CD4-positive, alpha-beta memory T cell (primary cell): ENCODE measurements at regions of chr6 and their contacts with region 1.

Region 1: GRCh38 chr6:139364302-139364981 is 10.0 kb downstream of the CITED2 start:
- DNase-seq: peak in 4 of 5 donors; percentile 66 to 74 (median 68)
- H3K4me3 ChIP-seq: no peak overlapping the region
- H3K4me3 Mint-ChIP-seq: peak overlapping the region in 7 of 8 donors; percentile 27 to 64 (median 36)
- H3K27ac ChIP-seq: no peak overlapping the region
- H3K27ac Mint-ChIP-seq: peak overlapping the region in 6 of 7 donors; percentile 2 to 82 (median 62)
- H3K4me1 ChIP-seq: peaks cover 20% of the 10 kb centered on the region
- H3K4me1 Mint-ChIP-seq: peaks cover 28 to 45% (median 33%) of the 10 kb centered on the region in 4 donors
- H3K27me3 ChIP-seq: no peaks in the 10 kb centered on the region
- H3K27me3 Mint-ChIP-seq: no peaks in the 10 kb centered on the region

Region 2: GRCh38 chr6:139081471-139081870 is 283.0 kb before region 1 on chr6:
- CTCF ChIA-PET with region 1: no interaction called
- POLR2A ChIA-PET with region 1: no interaction called
- intact Hi-C with region 1: no loop called
- DNase-seq: no peak
- H3K4me3 ChIP-seq: no peak overlapping the region
- H3K4me3 Mint-ChIP-seq: no peak overlapping the region
- H3K27ac ChIP-seq: no peak overlapping the region
- H3K27ac Mint-ChIP-seq: no peak overlapping the region
- H3K4me1 ChIP-seq: no peaks in the 10 kb centered on the region
- H3K4me1 Mint-ChIP-seq: peaks cover 0 to 10% (median 6%) of the 10 kb centered on the region in 4 donors
- H3K27me3 ChIP-seq: no peaks in the 10 kb centered on the region
- H3K27me3 Mint-ChIP-seq: peaks cover 0 to 1% of the 10 kb centered on the region in 2 donors

Region 3: DNA sequence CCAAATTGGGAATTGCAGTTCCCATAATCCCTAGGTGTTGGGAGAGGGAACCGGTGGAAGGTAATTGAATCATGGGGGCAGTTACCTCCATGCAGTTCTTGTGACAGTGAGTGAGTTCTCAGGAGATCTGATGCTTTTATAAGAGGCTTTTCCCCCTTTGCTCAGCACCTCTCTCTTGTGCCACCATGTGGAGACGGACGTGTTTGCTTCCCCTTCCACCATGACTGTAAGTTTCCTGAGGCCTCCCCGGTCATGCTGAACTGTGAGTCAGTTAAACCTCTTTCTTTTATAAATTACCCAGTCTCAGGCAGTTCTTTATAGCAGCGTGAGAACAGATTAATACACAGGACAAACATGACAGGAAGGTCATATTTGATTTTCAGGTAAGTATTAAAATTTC is 254.9 kb before region 1 on chr6:
- CTCF ChIA-PET with region 1: interaction called, 19 read pairs
- POLR2A ChIA-PET with region 1: interaction called, 6 read pairs
- intact Hi-C with region 1: no loop called
- DNase-seq: peak in 4 of 5 donors; percentile 11 to 30 (median 21)
- H3K4me3 ChIP-seq: no peak overlapping the region
- H3K4me3 Mint-ChIP-seq: peak overlapping the region in 2 of 8 donors; percentile 13 to 39
- H3K27ac ChIP-seq: no peak overlapping the region
- H3K27ac Mint-ChIP-seq: peak overlapping the region; percentile 3 to 87 (median 44)
- H3K4me1 ChIP-seq: peaks cover 50% of the 10 kb centered on the region
- H3K4me1 Mint-ChIP-seq: peaks cover 38 to 59% (median 51%) of the 10 kb centered on the region in 4 donors
- H3K27me3 ChIP-seq: no peaks in the 10 kb centered on the region
- H3K27me3 Mint-ChIP-seq: no peaks in the 10 kb centered on the region

Region 4: DNA sequence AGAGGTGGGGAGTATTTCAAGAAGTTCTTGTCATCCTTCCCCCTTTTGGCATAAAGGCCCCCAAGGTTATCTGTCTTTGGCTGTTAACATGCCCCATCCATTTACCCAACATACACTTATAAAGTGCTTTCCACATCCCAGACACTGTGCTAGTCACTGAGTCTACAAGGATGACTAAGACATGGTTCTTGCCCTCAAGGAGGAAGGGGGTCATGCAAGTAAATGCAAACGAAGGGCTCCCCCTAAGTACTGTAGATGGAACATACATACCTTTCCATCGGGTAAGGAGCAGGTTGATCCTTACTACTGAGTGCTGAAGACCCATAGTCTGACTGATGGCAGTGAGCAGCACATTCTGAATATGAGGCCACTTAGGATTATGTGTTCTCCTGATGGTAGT is 191.3 kb before region 1 on chr6:
- CTCF ChIA-PET with region 1: interaction called, 10 read pairs
- POLR2A ChIA-PET with region 1: no interaction called
- intact Hi-C with region 1: no loop called
- DNase-seq: peak in 3 of 5 donors; percentile 24 to 61 (median 25)
- H3K4me3 ChIP-seq: no peak overlapping the region
- H3K4me3 Mint-ChIP-seq: peak overlapping the region in 7 of 8 donors; percentile 20 to 69 (median 53)
- H3K27ac ChIP-seq: no peak overlapping the region
- H3K27ac Mint-ChIP-seq: peak overlapping the region; percentile 29 to 88 (median 77)
- H3K4me1 ChIP-seq: peaks cover 97% of the 10 kb centered on the region
- H3K4me1 Mint-ChIP-seq: peaks cover 81 to 93% (median 89%) of the 10 kb centered on the region in 4 donors
- H3K27me3 ChIP-seq: no peaks in the 10 kb centered on the region
- H3K27me3 Mint-ChIP-seq: no peaks in the 10 kb centered on the region

Region 5: DNA sequence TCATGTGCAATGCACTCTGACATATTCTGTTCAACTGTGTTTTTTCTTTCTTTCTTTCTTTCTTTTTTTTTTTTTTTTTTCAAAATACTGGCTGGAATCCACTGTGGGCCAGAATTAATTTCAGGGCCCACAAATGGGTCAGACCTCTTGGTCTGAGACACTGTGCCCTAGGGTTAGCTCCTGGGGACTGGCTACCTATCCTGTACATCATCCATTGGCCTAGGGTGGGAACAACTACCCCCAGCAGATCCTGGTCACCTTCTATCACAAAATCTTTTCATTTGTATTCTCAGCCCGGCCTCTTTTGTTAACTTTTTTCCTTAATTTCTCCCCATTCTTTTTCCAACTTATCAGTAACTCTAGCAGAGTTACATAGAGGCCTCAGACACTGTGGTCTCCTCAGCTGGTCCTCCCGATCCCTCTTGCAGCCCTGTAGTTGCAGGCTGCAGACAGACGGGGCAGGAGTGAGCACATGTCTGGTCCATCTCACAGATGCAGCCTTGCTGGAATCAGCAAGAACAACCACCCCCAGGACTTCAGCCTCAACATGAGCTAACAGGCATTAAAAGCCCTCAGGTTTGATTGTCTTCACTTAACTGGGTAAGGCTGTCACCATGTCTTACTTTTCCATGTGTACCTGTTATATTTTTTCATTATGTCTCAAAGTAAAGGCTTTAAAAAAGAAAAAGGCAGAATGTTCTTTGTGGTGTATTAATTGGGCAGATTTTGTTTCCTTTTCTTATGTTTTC is 114.0 kb before region 1 on chr6:
- CTCF ChIA-PET with region 1: interaction called, 22 read pairs
- POLR2A ChIA-PET with region 1: interaction called, 14 read pairs
- intact Hi-C with region 1: loop called (anchors 1 kb)
- DNase-seq: peak; percentile 55 to 62 (median 60)
- H3K4me3 ChIP-seq: peak overlapping the region in 1 of 2 donors; percentile 1
- H3K4me3 Mint-ChIP-seq: peak overlapping the region; percentile 16 to 90 (median 69)
- H3K27ac ChIP-seq: peak overlapping the region; percentile 40
- H3K27ac Mint-ChIP-seq: peak overlapping the region; percentile 80 to 99 (median 92)
- H3K4me1 ChIP-seq: peaks cover 45% of the 10 kb centered on the region
- H3K4me1 Mint-ChIP-seq: peaks cover 40 to 51% (median 44%) of the 10 kb centered on the region in 4 donors
- H3K27me3 ChIP-seq: no peaks in the 10 kb centered on the region
- H3K27me3 Mint-ChIP-seq: no peaks in the 10 kb centered on the region

Region 6: DNA sequence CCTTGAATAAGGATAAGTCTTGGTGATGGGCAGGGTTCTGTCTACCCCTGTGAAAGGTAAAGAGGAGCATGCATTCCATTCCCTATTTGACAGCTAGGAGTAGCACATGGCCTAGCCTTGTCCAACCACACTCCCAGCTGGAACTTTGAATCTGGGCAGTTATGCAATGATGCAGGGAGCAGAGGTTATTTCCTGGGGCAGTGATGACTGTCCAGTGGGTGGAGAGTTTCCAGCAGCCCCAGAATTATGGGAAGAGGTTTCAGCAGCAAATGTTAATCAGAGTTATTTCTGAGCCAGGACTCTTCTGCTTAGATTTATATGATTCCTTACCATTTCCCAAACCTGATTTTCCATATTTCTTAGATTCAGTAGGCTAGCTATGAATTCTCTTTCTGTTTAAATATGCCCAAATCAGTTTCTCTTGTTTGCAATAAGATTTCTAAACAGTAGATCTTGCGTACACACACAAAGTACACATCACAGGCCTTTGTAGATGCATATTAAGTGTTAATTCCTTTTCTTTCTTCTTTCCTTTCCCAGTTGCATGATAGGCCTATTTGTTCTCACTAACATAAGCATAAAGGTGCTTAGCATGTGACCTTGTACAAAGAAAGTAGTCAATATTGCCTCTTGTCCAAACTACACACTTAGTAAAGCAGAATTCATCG is 55.4 kb before region 1 on chr6:
- CTCF ChIA-PET with region 1: no interaction called
- POLR2A ChIA-PET with region 1: no interaction called
- intact Hi-C with region 1: no loop called
- DNase-seq: no peak
- H3K4me3 ChIP-seq: no peak overlapping the region
- H3K4me3 Mint-ChIP-seq: no peak overlapping the region
- H3K27ac ChIP-seq: no peak overlapping the region
- H3K27ac Mint-ChIP-seq: no peak overlapping the region
- H3K4me1 ChIP-seq: no peaks in the 10 kb centered on the region
- H3K4me1 Mint-ChIP-seq: peaks cover 3 to 9% (median 7%) of the 10 kb centered on the region in 4 donors
- H3K27me3 ChIP-seq: no peaks in the 10 kb centered on the region
- H3K27me3 Mint-ChIP-seq: no peaks in the 10 kb centered on the region

Region 7: GRCh38 chr6:139666284-139666683 is 301.8 kb after region 1 on chr6:
- CTCF ChIA-PET with region 1: no interaction called
- POLR2A ChIA-PET with region 1: no interaction called
- intact Hi-C with region 1: no loop called
- DNase-seq: no peak
- H3K4me3 ChIP-seq: no peak overlapping the region
- H3K4me3 Mint-ChIP-seq: no peak overlapping the region
- H3K27ac ChIP-seq: no peak overlapping the region
- H3K27ac Mint-ChIP-seq: no peak overlapping the region
- H3K4me1 ChIP-seq: no peaks in the 10 kb centered on the region
- H3K4me1 Mint-ChIP-seq: no peaks in the 10 kb centered on the region
- H3K27me3 ChIP-seq: no peaks in the 10 kb centered on the region
- H3K27me3 Mint-ChIP-seq: peaks cover 0 to 7% of the 10 kb centered on the region in 2 donors